CD4-positive, alpha-beta memory T cell (primary cell): ENCODE measurements at regions of chr13 and their contacts with region 1.

Region 1: GRCh38 chr13:30408319-30409101 is 13.8 kb upstream of the UBE2L5 start:
- DNase-seq: peak; percentile 87 to 91 (median 87)
- H3K4me3 ChIP-seq: peak overlapping the region in 1 of 2 donors; percentile 33
- H3K4me3 Mint-ChIP-seq: peak overlapping the region; percentile 46 to 79 (median 68)
- H3K27ac ChIP-seq: peak overlapping the region; percentile 40
- H3K27ac Mint-ChIP-seq: peak overlapping the region; percentile 75 to 91 (median 87)
- H3K4me1 ChIP-seq: peaks cover 14% of the 10 kb centered on the region
- H3K4me1 Mint-ChIP-seq: peaks cover 14 to 52% (median 27%) of the 10 kb centered on the region in 4 donors
- H3K27me3 ChIP-seq: no peaks in the 10 kb centered on the region
- H3K27me3 Mint-ChIP-seq: no peaks in the 10 kb centered on the region

Region 2: GRCh38 chr13:30388406-30389283 is 19.9 kb before region 1 on chr13:
- CTCF ChIA-PET with region 1: interaction called, 25 read pairs
- POLR2A ChIA-PET with region 1: interaction called, 12 read pairs
- intact Hi-C with region 1: no loop called
- DNase-seq: no peak
- H3K4me3 ChIP-seq: peak overlapping the region in 1 of 2 donors; percentile 29
- H3K4me3 Mint-ChIP-seq: peak overlapping the region; percentile 63 to 88 (median 80)
- H3K27ac ChIP-seq: peak overlapping the region; percentile 23
- H3K27ac Mint-ChIP-seq: peak overlapping the region; percentile 58 to 93 (median 90)
- H3K4me1 ChIP-seq: peaks cover 32% of the 10 kb centered on the region
- H3K4me1 Mint-ChIP-seq: peaks cover 28 to 50% (median 39%) of the 10 kb centered on the region in 4 donors
- H3K27me3 ChIP-seq: no peaks in the 10 kb centered on the region
- H3K27me3 Mint-ChIP-seq: no peaks in the 10 kb centered on the region

Region 3: GRCh38 chr13:30422054-30422839 is 13.7 kb after region 1 on chr13 and contains the start of gene UBE2L5:
- CTCF ChIA-PET with region 1: interaction called, 19 read pairs
- POLR2A ChIA-PET with region 1: interaction called, 16 read pairs
- intact Hi-C with region 1: loop called (anchors 1 kb)
- DNase-seq: peak; percentile 68 to 77 (median 71)
- H3K4me3 ChIP-seq: peak within 1 kb of the TSS; percentile 42 to 58
- H3K4me3 Mint-ChIP-seq: peak within 1 kb of the TSS; percentile 81 to 94 (median 88)
- H3K27ac ChIP-seq: peak within 1 kb of the TSS; percentile 1
- H3K27ac Mint-ChIP-seq: peak within 1 kb of the TSS; percentile 78 to 93 (median 87)
- H3K4me1 ChIP-seq: peaks cover 19% of the 10 kb centered on the region
- H3K4me1 Mint-ChIP-seq: peaks cover 13 to 27% (median 18%) of the 10 kb centered on the region in 4 donors
- H3K27me3 ChIP-seq: no peaks in the 10 kb centered on the region
- H3K27me3 Mint-ChIP-seq: no peaks in the 10 kb centered on the region
- total RNA-seq, gene UBE2L5: not detected

Region 4: DNA sequence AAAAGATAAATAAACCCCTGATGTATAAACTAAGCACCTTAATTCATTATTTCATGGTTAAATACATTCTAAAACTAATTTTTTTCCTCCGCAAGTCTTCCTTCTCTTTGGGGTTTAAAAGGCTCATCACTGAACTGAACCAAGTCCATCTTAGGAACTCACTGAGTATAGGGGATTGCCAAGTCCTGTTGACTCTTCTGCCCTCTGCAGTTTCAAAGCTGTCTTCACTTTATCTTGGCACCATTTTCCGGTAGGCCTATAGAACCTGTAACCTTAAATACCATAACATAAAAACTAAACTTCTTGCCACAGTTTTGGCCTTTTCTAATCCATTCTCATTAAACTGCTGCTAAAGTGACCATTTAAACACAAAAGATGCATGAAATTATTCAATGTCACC is 142.7 kb after region 1 on chr13:
- CTCF ChIA-PET with region 1: interaction called, 5 read pairs
- POLR2A ChIA-PET with region 1: no interaction called
- intact Hi-C with region 1: loop called (anchors 1 kb)
- DNase-seq: peak in 4 of 5 donors; percentile 19 to 21 (median 20)
- H3K4me3 ChIP-seq: no peak overlapping the region
- H3K4me3 Mint-ChIP-seq: no peak overlapping the region
- H3K27ac ChIP-seq: no peak overlapping the region
- H3K27ac Mint-ChIP-seq: no peak overlapping the region
- H3K4me1 ChIP-seq: no peaks in the 10 kb centered on the region
- H3K4me1 Mint-ChIP-seq: peaks cover 0 to 3% (median under 1%) of the 10 kb centered on the region in 4 donors
- H3K27me3 ChIP-seq: no peaks in the 10 kb centered on the region
- H3K27me3 Mint-ChIP-seq: no peaks in the 10 kb centered on the region

Region 5: DNA sequence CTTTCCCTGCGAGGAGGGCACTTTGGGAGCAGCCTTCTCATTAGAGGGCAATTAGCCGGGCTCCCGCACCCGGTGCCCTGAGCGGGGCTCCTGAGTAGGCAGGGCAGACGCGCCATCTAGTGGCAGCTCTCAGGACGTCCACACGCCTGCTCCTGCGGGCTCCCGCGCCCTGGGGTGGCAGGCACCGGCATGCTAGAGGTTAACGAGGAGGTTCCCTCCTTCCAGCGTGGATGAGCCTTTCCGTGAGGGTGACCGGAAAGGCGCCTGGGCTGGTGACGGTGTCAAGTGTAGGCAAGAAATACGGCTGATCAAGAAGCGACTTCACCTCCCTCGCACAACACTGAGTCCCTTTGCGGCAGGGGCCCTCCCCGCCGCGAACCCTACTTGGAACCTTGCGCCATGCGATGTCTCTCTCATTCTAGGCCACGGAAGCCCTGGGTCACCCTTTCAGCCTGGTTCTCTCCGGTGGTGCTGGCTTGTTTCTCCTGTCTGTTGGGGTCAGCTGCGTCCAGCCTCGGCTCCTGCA is 394.5 kb after region 1 on chr13:
- CTCF ChIA-PET with region 1: no interaction called
- POLR2A ChIA-PET with region 1: no interaction called
- intact Hi-C with region 1: loop called (anchors 1 kb)
- DNase-seq: peak; percentile 71 to 78 (median 74)
- H3K4me3 ChIP-seq: no peak overlapping the region
- H3K4me3 Mint-ChIP-seq: peak overlapping the region; percentile 32 to 76 (median 62)
- H3K27ac ChIP-seq: no peak overlapping the region
- H3K27ac Mint-ChIP-seq: peak overlapping the region in 4 of 7 donors; percentile 46 to 70 (median 62)
- H3K4me1 ChIP-seq: peaks cover 9% of the 10 kb centered on the region
- H3K4me1 Mint-ChIP-seq: peaks cover 7 to 21% (median 8%) of the 10 kb centered on the region in 4 donors
- H3K27me3 ChIP-seq: no peaks in the 10 kb centered on the region
- H3K27me3 Mint-ChIP-seq: no peaks in the 10 kb centered on the region